SK-N-SH (cell line): ENCODE measurements at regions of chr1 and their contacts with region 1.

Region 1: DNA sequence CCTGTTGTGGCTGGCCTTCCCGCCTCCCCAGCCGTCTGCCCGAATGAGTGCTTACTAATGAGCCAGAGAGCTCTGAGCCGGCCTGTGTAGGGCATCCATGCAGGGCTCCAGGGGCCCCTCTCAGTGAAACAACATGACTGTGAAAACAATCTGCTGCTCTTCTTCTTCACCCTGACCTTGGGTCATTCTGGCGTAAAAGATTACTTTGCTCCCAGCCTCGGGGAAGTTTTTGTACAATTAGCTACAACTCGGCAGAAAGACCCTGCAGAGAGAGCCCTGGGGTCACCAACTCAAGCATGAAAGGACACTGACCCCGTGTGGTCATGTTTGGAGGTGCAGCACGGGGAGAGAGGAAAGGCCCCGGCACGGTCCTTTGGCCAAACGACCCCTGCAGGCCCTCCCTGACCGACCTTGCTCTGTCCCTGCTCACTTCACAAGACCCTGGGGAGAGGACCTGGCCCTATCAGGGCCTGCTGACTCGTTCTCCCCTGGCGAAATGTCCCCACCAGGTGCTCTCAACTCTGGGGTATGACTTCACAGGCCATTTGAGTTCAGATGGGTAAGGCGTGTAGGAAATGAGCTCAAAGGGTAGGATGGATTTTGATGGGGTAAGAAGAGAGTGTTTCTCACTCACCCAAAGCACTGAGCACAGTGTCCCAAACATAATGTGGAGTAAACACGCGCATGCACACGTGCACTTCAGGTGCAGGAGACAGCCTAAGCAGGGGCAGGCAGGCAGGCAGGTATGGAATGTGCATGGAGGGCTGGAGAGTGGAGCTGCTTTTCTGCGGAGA is 22.9 kb upstream of the FAM20B start:
- DNase-seq: peak; percentile 79
- H3K4me3 ChIP-seq: peak overlapping the region in 1 of 2 experiments; percentile 39; a peak in 1 of 4 replicates
- H3K27ac ChIP-seq: no peak overlapping the region
- H3K4me1 ChIP-seq: peaks cover 0 to 2% of the 10 kb centered on the region in 2 experiments; a peak in 1 of 4 replicates
- H3K27me3 ChIP-seq: no peaks in the 10 kb centered on the region
- CTCF ChIP-seq: peak; percentile 96
- EP300 ChIP-seq: no peak
- RAD21 ChIP-seq: peak; percentile 95

Region 2: GRCh38 chr1:178501705-178502329 is 500.9 kb before region 1 on chr1:
- CTCF ChIA-PET with region 1: interaction called, 10 read pairs
- POLR2A ChIA-PET with region 1: no interaction called
- DNase-seq: peak; percentile 85
- H3K4me3 ChIP-seq: no peak overlapping the region; a peak in 1 of 4 replicates
- H3K27ac ChIP-seq: no peak overlapping the region
- H3K4me1 ChIP-seq: no peaks in the 10 kb centered on the region; a peak in 1 of 4 replicates
- H3K27me3 ChIP-seq: no peaks in the 10 kb centered on the region
- CTCF ChIP-seq: peak; percentile 91
- EP300 ChIP-seq: no peak
- RAD21 ChIP-seq: peak; percentile 69

Region 3: DNA sequence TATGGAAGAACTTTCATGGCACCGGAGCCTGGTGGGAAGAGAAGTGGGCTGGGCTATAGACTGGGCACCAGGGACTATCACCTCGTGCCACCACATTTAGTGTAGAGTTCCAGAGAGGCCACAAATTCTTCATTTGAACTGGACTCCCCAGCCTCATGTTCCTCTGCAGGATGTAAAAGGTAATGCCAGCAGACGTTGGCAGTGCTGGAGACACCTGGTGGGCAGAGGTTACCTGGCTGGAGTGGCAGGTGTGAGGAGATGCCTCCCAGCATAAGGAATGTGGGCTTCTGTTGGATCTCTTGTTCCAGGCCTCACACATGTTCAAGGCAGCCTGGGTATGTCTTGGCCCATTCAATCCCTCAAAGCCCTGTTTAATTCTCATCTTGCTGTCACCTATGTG is 454.6 kb before region 1 on chr1:
- CTCF ChIA-PET with region 1: interaction called, 128 read pairs
- POLR2A ChIA-PET with region 1: interaction called, 6 read pairs
- DNase-seq: no peak
- H3K4me3 ChIP-seq: no peak overlapping the region
- H3K27ac ChIP-seq: no peak overlapping the region
- H3K4me1 ChIP-seq: peaks cover 0 to 18% of the 10 kb centered on the region in 2 experiments; a peak in 2 of 4 replicates
- H3K27me3 ChIP-seq: no peaks in the 10 kb centered on the region
- CTCF ChIP-seq: no peak
- EP300 ChIP-seq: no peak
- RAD21 ChIP-seq: no peak

Region 4: GRCh38 chr1:178784131-178784536 is 218.6 kb before region 1 on chr1:
- CTCF ChIA-PET with region 1: interaction called, 48 read pairs
- POLR2A ChIA-PET with region 1: no interaction called
- DNase-seq: no peak
- H3K4me3 ChIP-seq: no peak overlapping the region
- H3K27ac ChIP-seq: no peak overlapping the region
- H3K4me1 ChIP-seq: peaks cover 0 to 7% of the 10 kb centered on the region in 2 experiments; a peak in 1 of 4 replicates
- H3K27me3 ChIP-seq: no peaks in the 10 kb centered on the region
- CTCF ChIP-seq: no peak
- EP300 ChIP-seq: no peak
- RAD21 ChIP-seq: no peak

Region 5: DNA sequence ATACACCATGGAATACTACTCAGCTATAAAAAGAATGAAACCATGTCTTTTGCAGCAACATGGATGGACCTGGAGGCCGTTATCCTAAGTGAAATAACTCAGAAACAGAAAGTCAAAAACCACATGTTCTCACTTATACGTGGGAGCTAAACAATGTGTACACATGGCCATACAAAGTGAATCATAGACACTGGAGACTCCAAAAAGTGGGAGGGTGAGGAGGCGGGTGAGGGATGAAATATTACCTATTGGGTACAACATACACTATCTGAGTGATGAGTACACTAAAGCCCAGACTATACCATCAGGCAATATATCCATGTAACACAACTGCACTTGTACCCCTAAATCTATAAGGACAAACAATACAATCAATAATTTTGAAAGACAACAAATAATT is 16.5 kb before region 1 on chr1:
- CTCF ChIA-PET with region 1: interaction called, 11 read pairs
- POLR2A ChIA-PET with region 1: no interaction called
- DNase-seq: no peak
- H3K4me3 ChIP-seq: no peak overlapping the region
- H3K27ac ChIP-seq: no peak overlapping the region
- H3K4me1 ChIP-seq: no peaks in the 10 kb centered on the region
- H3K27me3 ChIP-seq: no peaks in the 10 kb centered on the region
- CTCF ChIP-seq: no peak
- EP300 ChIP-seq: no peak
- RAD21 ChIP-seq: no peak

Region 6: GRCh38 chr1:179043266-179043665 is 40.5 kb after region 1 on chr1:
- CTCF ChIA-PET with region 1: interaction called, 10 read pairs
- POLR2A ChIA-PET with region 1: no interaction called
- DNase-seq: no peak
- H3K4me3 ChIP-seq: no peak overlapping the region
- H3K27ac ChIP-seq: no peak overlapping the region
- H3K4me1 ChIP-seq: peaks cover 11 to 22% of the 10 kb centered on the region in 2 experiments; a peak in 3 of 4 replicates
- H3K27me3 ChIP-seq: no peaks in the 10 kb centered on the region
- CTCF ChIP-seq: no peak
- EP300 ChIP-seq: no peak
- RAD21 ChIP-seq: no peak